ENCODE measurements at regions of chr6 and their contacts with region 1.

Region 1: GRCh38 chr6:25404693-25405169 is 125.6 kb downstream of the CARMIL1 start:
- H3K4me3 Mint-ChIP-seq: peak overlapping the region; percentile 60
- H3K27ac Mint-ChIP-seq: no peak overlapping the region
- H3K4me1 Mint-ChIP-seq: peaks cover 27% of the 10 kb centered on the region
- H3K27me3 Mint-ChIP-seq: no peaks in the 10 kb centered on the region

Region 2: GRCh38 chr6:25389471-25389870 is 15.3 kb before region 1 on chr6:
- intact Hi-C with region 1: no loop called
- H3K4me3 Mint-ChIP-seq: no peak overlapping the region
- H3K27ac Mint-ChIP-seq: peak overlapping the region; percentile 20
- H3K4me1 Mint-ChIP-seq: peaks cover 17% of the 10 kb centered on the region
- H3K27me3 Mint-ChIP-seq: no peaks in the 10 kb centered on the region

Region 3: DNA sequence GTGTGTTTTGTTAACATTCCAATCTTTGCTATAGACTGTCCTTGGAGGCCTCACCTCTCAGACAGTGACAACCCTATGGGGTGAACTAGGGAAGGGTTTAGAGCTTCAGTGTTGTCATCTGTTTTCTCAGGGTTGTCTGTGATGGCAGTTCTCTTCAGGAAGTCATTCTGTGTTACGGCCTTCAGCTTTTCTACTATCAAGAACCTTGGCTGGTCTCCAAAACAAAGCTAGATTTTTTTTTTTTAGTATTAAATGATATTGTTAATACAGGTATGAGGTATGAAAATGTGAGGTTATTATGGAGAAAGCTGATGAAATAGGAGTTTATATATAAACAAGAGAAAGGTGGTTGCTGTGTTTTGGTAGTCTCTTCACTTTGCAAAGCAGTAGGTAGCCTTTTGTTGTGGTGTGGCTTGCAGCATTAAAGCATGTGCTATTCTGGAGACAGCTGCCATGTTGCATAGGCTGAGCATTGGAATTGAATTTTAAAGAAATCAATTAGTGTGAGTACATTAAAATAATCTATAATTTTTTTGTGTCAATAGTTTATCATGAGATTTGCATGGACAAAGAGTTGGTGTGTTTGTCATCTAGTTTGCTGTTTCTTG is 37.0 kb after region 1 on chr6:
- intact Hi-C with region 1: loop called (anchors 5 kb)
- H3K4me3 Mint-ChIP-seq: no peak overlapping the region
- H3K27ac Mint-ChIP-seq: no peak overlapping the region
- H3K4me1 Mint-ChIP-seq: peaks cover 35% of the 10 kb centered on the region
- H3K27me3 Mint-ChIP-seq: no peaks in the 10 kb centered on the region